ENCODE measurements at regions of chr1 and their contacts with region 1.

Region 1: DNA sequence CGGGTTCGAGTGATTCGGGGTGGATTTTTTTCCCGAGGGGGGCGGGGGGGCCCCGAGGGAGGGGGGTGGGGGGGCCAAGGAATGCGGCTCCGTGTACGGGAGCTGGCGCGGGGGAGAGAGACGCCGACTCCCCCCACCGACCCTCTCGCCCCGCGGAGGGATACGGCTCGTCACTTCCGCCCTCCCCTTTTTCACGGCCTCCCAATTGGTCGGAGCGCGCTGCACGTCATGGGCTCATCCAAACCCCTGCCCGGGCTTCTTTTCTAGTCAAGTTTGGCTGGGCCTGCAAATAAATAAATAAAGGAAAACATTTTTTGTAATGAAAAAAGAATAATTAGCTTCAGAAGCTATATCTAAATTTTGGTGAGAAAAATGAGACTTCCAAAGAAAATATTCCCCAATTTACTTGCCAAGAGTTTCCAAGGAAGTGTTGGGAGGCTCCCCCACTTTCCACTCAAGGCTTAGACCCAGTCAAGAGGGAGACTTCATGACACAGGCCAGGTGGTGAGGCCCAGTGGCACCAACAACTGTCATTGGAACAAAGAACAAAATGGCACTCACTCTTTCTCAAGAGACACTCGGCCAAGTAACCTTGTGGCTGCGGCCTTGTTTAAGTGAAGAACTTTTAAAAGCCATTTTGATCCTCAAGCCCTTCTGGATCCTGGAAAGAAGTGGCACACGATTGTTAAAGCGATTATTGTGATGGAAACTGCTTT is at the start of gene POGZ:
- DNase-seq: peak; percentile 92 to 97 (median 94)
- ATAC-seq: peak; percentile 63
- H3K4me3 ChIP-seq: peak within 1 kb of the TSS; percentile 87
- H3K4me3 Mint-ChIP-seq: peak within 1 kb of the TSS; percentile 97
- H3K27ac ChIP-seq: peak within 1 kb of the TSS; percentile 70 to 87
- H3K27ac Mint-ChIP-seq: peak within 1 kb of the TSS; percentile 97
- H3K4me1 ChIP-seq: peaks cover 21% of the 10 kb centered on the region
- H3K4me1 Mint-ChIP-seq: peaks cover 40% of the 10 kb centered on the region
- H3K27me3 ChIP-seq: peaks cover 4 to 6% of the 10 kb centered on the region in 2 experiments
- H3K27me3 Mint-ChIP-seq: peaks cover 36% of the 10 kb centered on the region
- CTCF ChIP-seq: no peak
- total RNA-seq, gene POGZ: 97.8 to 99.4 TPM

Region 2: GRCh38 chr1:151238467-151238739 is 221.1 kb before region 1 on chr1:
- CTCF ChIA-PET with region 1: no interaction called
- POLR2A ChIA-PET with region 1: no interaction called
- intact Hi-C with region 1: no loop called
- DNase-seq: no peak
- ATAC-seq: no peak
- H3K4me3 ChIP-seq: no peak overlapping the region
- H3K4me3 Mint-ChIP-seq: no peak overlapping the region
- H3K27ac ChIP-seq: no peak overlapping the region
- H3K27ac Mint-ChIP-seq: no peak overlapping the region
- H3K4me1 ChIP-seq: no peaks in the 10 kb centered on the region
- H3K4me1 Mint-ChIP-seq: no peaks in the 10 kb centered on the region
- H3K27me3 ChIP-seq: no peaks in the 10 kb centered on the region
- H3K27me3 Mint-ChIP-seq: no peaks in the 10 kb centered on the region
- CTCF ChIP-seq: no peak

Region 3: DNA sequence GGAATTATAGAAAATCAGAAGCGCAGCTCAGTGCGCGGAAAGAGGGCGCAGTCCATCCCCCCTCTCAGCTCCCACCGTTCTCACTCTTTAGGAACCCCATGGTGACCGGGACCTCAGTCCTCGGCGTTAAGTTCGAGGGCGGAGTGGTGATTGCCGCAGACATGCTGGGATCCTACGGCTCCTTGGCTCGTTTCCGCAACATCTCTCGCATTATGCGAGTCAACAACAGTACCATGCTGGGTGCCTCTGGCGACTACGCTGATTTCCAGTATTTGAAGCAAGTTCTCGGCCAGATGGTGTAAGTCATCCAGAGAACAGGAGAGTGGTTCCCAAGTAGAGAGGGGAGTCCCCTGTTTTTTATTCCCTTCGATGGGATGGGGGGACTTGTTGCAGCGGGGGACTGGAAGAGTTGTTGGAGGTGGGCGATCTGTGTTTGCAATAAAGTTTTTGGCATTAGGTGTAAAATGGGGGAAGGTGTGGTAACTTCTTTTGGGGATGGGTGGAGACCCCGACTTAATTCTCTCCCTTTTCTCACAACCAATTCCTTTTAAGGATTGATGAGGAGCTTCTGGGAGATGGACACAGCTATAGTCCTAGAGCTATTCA is 59.5 kb before region 1 on chr1:
- CTCF ChIA-PET with region 1: no interaction called
- POLR2A ChIA-PET with region 1: interaction called, 6 read pairs
- intact Hi-C with region 1: loop called in 1 of 2 experiments (anchors 5 kb)
- DNase-seq: peak in 4 of 14 experiments; percentile 15 to 49 (median 39)
- ATAC-seq: peak; percentile 1
- H3K4me3 ChIP-seq: peak overlapping the region; percentile 99
- H3K4me3 Mint-ChIP-seq: peak overlapping the region; percentile 93
- H3K27ac ChIP-seq: peak overlapping the region; percentile 91 to 97
- H3K27ac Mint-ChIP-seq: peak overlapping the region; percentile 93
- H3K4me1 ChIP-seq: peaks cover 29% of the 10 kb centered on the region
- H3K4me1 Mint-ChIP-seq: peaks cover 27% of the 10 kb centered on the region
- H3K27me3 ChIP-seq: no peaks in the 10 kb centered on the region
- H3K27me3 Mint-ChIP-seq: no peaks in the 10 kb centered on the region
- CTCF ChIP-seq: no peak

Region 4: GRCh38 chr1:151472856-151473731 is 13.6 kb after region 1 on chr1:
- CTCF ChIA-PET with region 1: interaction called, 3 read pairs
- POLR2A ChIA-PET with region 1: interaction called, 24 read pairs
- intact Hi-C with region 1: loop called (anchors 1 kb)
- DNase-seq: peak in 12 of 14 experiments; percentile 1 to 54 (median 17)
- ATAC-seq: peak; percentile 61
- H3K4me3 ChIP-seq: peak overlapping the region; percentile 55
- H3K4me3 Mint-ChIP-seq: peak overlapping the region; percentile 91
- H3K27ac ChIP-seq: no peak overlapping the region
- H3K27ac Mint-ChIP-seq: peak overlapping the region; percentile 78
- H3K4me1 ChIP-seq: peaks cover 10% of the 10 kb centered on the region
- H3K4me1 Mint-ChIP-seq: peaks cover 8% of the 10 kb centered on the region
- H3K27me3 ChIP-seq: no peaks in the 10 kb centered on the region
- H3K27me3 Mint-ChIP-seq: peaks cover 5% of the 10 kb centered on the region
- CTCF ChIP-seq: no peak

Region 5: GRCh38 chr1:151510957-151511635 is 51.6 kb after region 1 on chr1 and contains the start of gene CGN:
- CTCF ChIA-PET with region 1: no interaction called
- POLR2A ChIA-PET with region 1: interaction called, 11 read pairs
- intact Hi-C with region 1: loop called (anchors 2 to 5 kb)
- DNase-seq: peak; percentile 70 to 95 (median 84)
- ATAC-seq: peak; percentile 97
- H3K4me3 ChIP-seq: peak within 1 kb of the TSS; percentile 76
- H3K4me3 Mint-ChIP-seq: peak within 1 kb of the TSS; percentile 97
- H3K27ac ChIP-seq: peak within 1 kb of the TSS in 1 of 2 donors; percentile 6
- H3K27ac Mint-ChIP-seq: peak within 1 kb of the TSS; percentile 75
- H3K4me1 ChIP-seq: peaks cover 30% of the 10 kb centered on the region
- H3K4me1 Mint-ChIP-seq: peaks cover 32% of the 10 kb centered on the region
- H3K27me3 ChIP-seq: no peaks in the 10 kb centered on the region
- H3K27me3 Mint-ChIP-seq: no peaks in the 10 kb centered on the region
- CTCF ChIP-seq: no peak
- total RNA-seq, gene CGN: 0.08 to 0.28 TPM

Region 6: DNA sequence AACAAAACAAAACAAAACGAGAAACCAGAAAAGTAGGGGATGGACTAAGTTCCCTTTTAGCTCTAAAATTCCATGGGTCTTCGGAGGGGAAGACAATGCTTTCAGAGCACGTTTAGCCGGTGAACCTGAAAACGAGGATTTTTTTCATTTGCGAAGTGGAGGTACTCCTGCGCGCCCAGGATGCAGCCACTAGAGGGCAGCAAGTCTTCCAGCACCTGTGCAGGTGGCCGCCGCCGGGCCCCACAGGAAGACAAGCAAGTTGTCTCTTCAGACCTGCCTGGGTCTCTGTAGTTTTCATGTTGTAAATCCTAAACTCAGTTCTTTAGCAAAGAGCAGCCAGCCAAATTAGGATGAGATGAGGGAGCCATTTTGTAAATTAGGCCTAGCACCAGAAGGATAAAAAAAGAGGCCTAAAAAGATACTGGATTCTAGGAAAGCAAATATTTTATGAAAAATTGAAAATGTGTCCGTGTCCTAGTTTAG is 134.7 kb after region 1 on chr1:
- CTCF ChIA-PET with region 1: interaction called, 4 read pairs
- POLR2A ChIA-PET with region 1: no interaction called
- intact Hi-C with region 1: loop called in 1 of 2 experiments (anchors 5 kb)
- DNase-seq: peak; percentile 80 to 92 (median 86)
- ATAC-seq: peak; percentile 100
- H3K4me3 ChIP-seq: peak overlapping the region; percentile 14
- H3K4me3 Mint-ChIP-seq: peak overlapping the region; percentile 49
- H3K27ac ChIP-seq: no peak overlapping the region
- H3K27ac Mint-ChIP-seq: no peak overlapping the region
- H3K4me1 ChIP-seq: peaks cover 11% of the 10 kb centered on the region
- H3K4me1 Mint-ChIP-seq: peaks cover 10% of the 10 kb centered on the region
- H3K27me3 ChIP-seq: peaks cover 0 to 6% of the 10 kb centered on the region in 2 experiments
- H3K27me3 Mint-ChIP-seq: peaks cover 4% of the 10 kb centered on the region
- CTCF ChIP-seq: peak; percentile 95

Region 7: DNA sequence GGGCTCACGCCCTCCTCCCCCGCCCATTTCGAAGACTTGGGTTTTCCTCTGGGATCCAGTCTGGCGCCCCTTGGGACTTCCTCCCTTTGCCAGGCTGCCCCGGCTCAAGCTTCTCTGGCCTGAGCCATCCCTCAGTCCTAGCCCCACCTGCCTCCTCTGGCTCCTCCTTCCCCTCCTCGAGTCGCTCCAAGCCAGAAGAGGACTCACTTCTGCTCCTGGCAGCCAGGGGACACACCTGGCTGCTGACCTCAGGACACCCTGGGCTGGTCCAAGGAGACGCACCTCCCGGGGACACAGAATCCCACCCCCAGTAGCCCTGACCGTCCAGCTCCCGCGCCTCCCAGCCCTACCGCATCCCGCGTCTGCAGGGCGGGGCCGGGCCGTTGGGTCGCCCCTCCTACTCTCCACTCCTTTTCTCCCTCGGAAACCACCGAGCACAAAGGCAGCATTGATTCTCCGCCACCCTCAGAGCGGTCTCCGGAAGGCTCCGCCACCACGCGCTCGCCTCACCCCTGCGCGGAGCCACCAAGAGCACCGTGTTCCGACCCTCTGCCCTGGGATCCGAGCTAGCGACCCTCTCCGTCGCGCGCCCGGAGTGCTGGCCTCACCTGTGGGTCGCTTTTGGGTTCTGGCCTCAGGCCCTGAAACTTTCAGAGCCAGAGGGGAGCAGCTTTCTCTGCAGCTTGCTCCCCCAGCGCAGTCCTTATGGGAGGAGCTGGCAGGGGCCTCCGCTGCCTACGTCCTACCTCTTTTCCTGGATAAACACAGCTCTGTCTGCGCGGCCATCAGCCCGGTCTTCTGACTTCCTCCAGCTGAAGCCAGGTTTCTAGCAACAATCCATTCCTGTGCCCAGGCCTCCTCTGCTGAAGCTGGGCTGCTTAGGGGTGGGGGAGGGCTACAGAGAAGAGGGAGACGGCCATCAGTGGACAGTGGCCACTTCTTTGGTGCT is 380.2 kb after region 1 on chr1 and contains the start of gene C2CD4D:
- CTCF ChIA-PET with region 1: no interaction called
- POLR2A ChIA-PET with region 1: interaction called, 6 read pairs
- intact Hi-C with region 1: loop called in 1 of 2 experiments (anchors 5 kb)
- DNase-seq: peak; percentile 50 to 91 (median 59)
- ATAC-seq: peak; percentile 78
- H3K4me3 ChIP-seq: peak within 1 kb of the TSS; percentile 70
- H3K4me3 Mint-ChIP-seq: peak within 1 kb of the TSS; percentile 85
- H3K27ac ChIP-seq: peak within 1 kb of the TSS; percentile 54 to 90
- H3K27ac Mint-ChIP-seq: peak within 1 kb of the TSS; percentile 86
- H3K4me1 ChIP-seq: peaks cover 55% of the 10 kb centered on the region
- H3K4me1 Mint-ChIP-seq: peaks cover 62% of the 10 kb centered on the region
- H3K27me3 ChIP-seq: no peaks in the 10 kb centered on the region
- H3K27me3 Mint-ChIP-seq: no peaks in the 10 kb centered on the region
- CTCF ChIP-seq: no peak
- total RNA-seq, gene C2CD4D: 0.75 to 0.88 TPM

Region 8: GRCh38 chr1:152047730-152048402 is 588.4 kb after region 1 on chr1:
- CTCF ChIA-PET with region 1: no interaction called
- POLR2A ChIA-PET with region 1: no interaction called
- intact Hi-C with region 1: no loop called
- DNase-seq: peak; percentile 65 to 95 (median 84)
- ATAC-seq: peak; percentile 89
- H3K4me3 ChIP-seq: peak overlapping the region; percentile 26
- H3K4me3 Mint-ChIP-seq: peak overlapping the region; percentile 72
- H3K27ac ChIP-seq: peak overlapping the region; percentile 94 to 96
- H3K27ac Mint-ChIP-seq: peak overlapping the region; percentile 96
- H3K4me1 ChIP-seq: peaks cover 39% of the 10 kb centered on the region
- H3K4me1 Mint-ChIP-seq: peaks cover 31% of the 10 kb centered on the region
- H3K27me3 ChIP-seq: peaks cover 0 to under 1% of the 10 kb centered on the region in 2 experiments
- H3K27me3 Mint-ChIP-seq: peaks cover 4% of the 10 kb centered on the region
- CTCF ChIP-seq: peak; percentile 52